Right ventricle myocardium superior (tissue), 1 donor: ENCODE measurements at regions of chr5 and their contacts with region 1.

Region 1: DNA sequence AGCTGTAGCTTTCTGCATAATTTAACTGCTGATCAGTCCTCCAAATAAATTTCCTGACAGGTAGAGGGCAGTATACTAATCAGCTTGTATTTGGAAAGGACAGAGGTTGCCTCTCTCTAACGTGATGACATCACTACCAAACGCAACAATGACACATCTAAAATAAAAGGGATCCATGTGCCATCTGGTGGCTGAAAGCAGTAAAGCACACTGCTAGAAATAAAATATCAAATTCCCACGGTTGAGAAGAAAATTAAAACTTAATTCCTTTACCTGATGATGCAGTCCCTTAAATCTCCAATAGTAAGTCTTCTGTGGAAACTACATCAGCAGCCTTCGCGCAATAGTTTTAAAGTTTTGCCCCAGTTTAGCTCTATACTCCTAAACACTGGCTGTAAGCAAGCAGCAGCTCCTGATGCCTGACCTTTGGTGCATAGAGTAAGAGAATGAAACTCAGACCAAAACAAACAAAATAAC is 54.5 kb downstream of the DIAPH1 start:
- DNase-seq: no peak
- ATAC-seq: peak; percentile 73

Region 2: GRCh38 chr5:141245250-141245717 is 319.0 kb before region 1 on chr5 and contains the start of gene PCDHB15:
- intact Hi-C with region 1: loop called (anchors 5 kb)
- DNase-seq: no peak
- ATAC-seq: peak; percentile 62
- total RNA-seq, gene PCDHB15: 3.9 TPM

Region 3: DNA sequence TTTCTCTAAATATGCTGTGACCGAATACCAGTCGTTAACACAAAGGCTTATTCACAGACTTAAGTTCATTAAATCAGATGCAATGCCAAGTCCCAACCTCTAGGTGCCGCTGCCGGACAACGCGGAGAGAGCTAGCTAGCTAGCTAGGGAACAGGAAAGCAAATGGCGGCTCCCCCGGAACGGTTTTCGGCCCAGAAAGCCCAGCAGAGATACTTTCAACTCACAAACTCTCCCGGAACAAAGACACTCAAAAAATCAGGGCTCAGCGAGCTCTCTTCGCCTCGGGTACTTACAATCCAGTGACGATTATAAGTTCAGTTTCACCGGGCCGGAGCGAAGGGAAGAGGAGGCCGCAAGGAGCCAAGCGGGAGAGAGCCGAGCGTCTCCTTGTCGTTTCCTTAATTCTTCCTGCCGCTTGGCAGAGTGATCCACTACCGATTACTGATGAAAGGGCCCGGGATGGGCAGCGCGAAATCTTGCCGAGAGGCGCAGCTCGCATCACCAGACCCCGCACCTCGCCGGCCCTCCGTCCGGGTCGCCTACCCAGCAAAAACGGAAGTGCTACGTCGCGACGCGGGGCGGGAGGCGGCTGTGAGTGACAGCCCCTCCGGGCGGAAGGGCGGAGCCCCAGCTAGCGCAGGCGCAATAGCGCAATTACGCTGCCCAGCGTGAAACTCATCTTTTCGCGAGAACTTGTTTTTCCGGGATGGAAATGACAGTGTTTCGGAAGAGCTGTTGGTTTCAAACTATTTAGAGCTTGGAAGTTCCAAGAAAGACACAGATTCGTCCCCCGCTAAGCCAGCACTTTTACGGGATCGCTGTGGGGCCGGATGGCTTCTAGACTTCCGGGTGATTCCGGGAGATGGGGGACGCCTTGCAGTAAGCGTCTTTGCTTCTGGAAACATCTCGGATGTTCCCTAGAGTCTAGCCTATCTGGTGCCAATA is 243.8 kb before region 1 on chr5 and contains the start of gene TAF7:
- intact Hi-C with region 1: loop called (anchors 5 kb)
- DNase-seq: peak; percentile 94
- ATAC-seq: peak; percentile 100
- total RNA-seq, gene TAF7: 101 TPM

Region 4: GRCh38 chr5:141813789-141814602 is 249.7 kb after region 1 on chr5:
- intact Hi-C with region 1: no loop called
- DNase-seq: peak; percentile 64
- ATAC-seq: peak; percentile 78